Activated T-helper 2 cell treated with anti-CD3 and anti-CD28 coated beads, Interferon-gamma antibody, Interleukin-2, Interleukin-4, amounts not matched to agents 10 μg/mL and 5 μg/mL and 100 μg/mL, durations not matched to agents 14 hours and 24 hours and 36 hours (primary cell): ENCODE measurements at regions of chr20 and their contacts with region 1.

Region 1: GRCh38 chr20:44885392-44886265 is at the start of gene YWHAB:
- DNase-seq: peak; percentile 97
- H3K4me3 Mint-ChIP-seq: peak within 1 kb of the TSS; percentile 97
- H3K27ac Mint-ChIP-seq: peak within 1 kb of the TSS; percentile 91
- H3K4me1 Mint-ChIP-seq: peaks cover 48% of the 10 kb centered on the region
- H3K27me3 Mint-ChIP-seq: peaks cover 1% of the 10 kb centered on the region
- total RNA-seq, gene YWHAB: 221 and 225 TPM in 2 replicates

Region 2: GRCh38 chr20:44642203-44643153 is 243.2 kb before region 1 on chr20:
- intact Hi-C with region 1: loop called (anchors 5 kb)
- DNase-seq: no peak
- H3K4me3 Mint-ChIP-seq: peak overlapping the region; percentile 14
- H3K27ac Mint-ChIP-seq: peak overlapping the region; percentile 87
- H3K4me1 Mint-ChIP-seq: peaks cover 60% of the 10 kb centered on the region
- H3K27me3 Mint-ChIP-seq: no peaks in the 10 kb centered on the region

Region 3: DNA sequence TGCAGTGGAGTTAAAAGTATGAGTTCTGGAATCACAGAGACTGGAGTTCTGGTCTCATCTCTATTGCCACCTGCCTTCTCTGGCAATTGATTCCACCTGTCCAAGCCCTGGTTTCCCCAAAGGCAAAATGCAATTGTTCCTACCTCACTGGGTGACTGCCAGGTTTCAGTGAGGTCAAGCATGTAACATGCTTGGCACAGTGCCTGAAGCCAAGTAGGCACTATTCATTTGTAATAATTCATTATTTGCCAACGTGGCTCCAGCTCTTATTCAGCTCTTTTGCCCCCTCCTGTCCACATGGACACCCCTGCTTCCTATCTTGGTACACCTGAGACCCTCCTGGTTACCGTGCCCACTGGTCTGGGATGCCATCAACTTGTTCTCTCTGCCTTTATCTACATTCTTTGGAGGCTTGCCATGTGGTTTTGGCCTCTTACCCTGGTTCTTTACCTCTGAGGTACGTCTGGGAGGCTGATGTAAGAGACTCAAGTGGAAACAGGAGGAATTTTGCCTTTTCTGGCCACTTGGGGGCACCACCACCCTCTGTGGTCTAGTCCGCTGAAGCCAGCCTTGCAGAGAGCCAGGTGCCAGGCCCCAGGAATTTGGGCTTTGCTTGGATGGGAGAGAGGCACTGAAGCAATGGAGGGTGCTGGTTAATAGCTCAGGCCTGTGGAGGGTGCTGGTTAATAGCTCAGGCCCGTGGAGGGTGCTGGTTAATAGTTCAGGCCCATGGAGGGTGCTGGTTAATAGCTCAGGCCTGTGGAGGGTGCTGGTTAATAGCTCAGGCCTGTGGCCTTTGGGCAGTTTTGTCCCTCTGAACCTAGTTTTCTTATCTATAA is 138.2 kb before region 1 on chr20:
- intact Hi-C with region 1: no loop called
- DNase-seq: peak; percentile 32
- H3K4me3 Mint-ChIP-seq: peak overlapping the region; percentile 47
- H3K27ac Mint-ChIP-seq: no peak overlapping the region
- H3K4me1 Mint-ChIP-seq: peaks cover 3% of the 10 kb centered on the region
- H3K27me3 Mint-ChIP-seq: peaks cover 30% of the 10 kb centered on the region

Region 4: GRCh38 chr20:44904377-44904776 is 18.7 kb after region 1 on chr20:
- intact Hi-C with region 1: loop called (anchors 2 kb)
- DNase-seq: no peak
- H3K4me3 Mint-ChIP-seq: no peak overlapping the region
- H3K27ac Mint-ChIP-seq: no peak overlapping the region
- H3K4me1 Mint-ChIP-seq: peaks cover 24% of the 10 kb centered on the region
- H3K27me3 Mint-ChIP-seq: no peaks in the 10 kb centered on the region